MCF 10A (cell line): ENCODE measurements at regions of chr15 and their contacts with region 1.

Region 1: DNA sequence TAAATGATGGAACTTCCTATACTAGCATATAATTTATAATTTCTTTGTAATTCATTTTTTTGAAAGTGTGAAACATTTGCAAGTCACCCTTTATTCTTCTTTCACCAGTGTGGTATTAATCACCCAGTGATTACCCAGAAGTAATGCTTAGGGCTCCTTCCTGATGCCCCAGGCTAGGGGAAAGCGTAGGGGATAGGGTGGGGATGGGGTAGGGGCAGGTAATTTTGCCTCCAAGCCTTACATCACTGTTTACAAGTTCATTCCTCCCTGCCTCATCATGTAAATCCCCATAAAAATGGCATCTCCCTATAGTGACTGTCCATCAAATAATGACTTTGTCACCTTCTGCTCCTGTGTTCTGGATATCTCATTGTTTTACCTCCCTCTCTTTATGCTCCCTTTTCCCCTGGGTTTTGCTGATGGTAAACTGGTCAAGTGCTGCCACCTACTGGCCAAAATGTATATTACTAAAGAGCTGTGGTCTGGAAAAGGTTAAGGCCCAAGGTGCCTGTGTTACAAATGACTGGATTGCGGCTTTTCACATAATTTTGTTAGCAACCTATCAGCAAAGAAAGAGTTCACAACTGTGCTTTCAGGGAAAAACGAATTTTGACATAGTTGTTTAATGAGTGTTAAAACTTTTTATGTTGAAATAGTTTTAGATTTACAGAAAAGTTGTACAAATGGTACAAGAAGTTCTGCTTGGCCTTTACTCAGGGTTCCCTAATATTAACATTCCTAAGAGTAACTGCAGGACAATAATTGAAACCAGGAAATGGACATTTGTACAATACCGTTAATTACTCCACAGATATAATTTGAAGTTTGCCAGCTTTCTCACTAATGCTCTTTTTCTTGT is 54.7 kb downstream of the ONECUT1 start:
- DNase-seq: peak; percentile 81
- H3K4me3 Mint-ChIP-seq: no peak overlapping the region
- H3K27ac Mint-ChIP-seq: no peak overlapping the region
- H3K4me1 Mint-ChIP-seq: peaks cover 1% of the 10 kb centered on the region
- H3K27me3 Mint-ChIP-seq: no peaks in the 10 kb centered on the region
- CTCF ChIP-seq: peak; percentile 81

Region 2: DNA sequence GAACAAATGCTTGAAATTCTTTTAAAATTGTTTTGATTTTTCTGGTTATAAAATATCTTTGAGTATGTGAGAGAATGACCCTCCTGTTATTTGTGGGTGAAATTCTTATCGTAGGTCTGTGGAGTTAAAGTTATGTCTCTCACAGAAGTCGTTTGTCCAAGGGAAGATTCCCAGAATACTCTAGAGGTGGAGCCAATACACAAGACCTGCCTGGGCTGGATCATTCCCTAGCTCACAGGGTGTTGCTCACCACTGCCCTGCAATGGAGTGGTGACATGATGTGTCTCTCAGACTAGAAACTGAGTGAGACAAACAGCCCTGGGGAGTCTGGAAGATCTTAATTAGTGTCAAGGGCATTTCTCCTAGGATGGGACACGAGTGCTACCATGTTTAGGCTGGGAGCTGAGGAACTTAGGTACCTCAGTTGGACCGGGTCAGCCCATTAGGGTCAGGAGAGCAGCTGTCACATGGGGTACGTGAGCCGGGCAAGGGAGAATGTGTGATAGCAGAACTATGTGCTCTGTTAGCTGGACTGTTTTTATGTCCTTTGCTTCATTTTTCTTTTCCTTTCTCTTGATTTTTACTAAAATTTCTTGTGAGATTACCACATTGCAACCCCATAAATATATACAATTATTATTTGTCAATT is 386.3 kb before region 1 on chr15:
- CTCF ChIA-PET with region 1: no interaction called
- POLR2A ChIA-PET with region 1: no interaction called
- intact Hi-C with region 1: no loop called
- DNase-seq: no peak
- H3K4me3 Mint-ChIP-seq: no peak overlapping the region
- H3K27ac Mint-ChIP-seq: no peak overlapping the region
- H3K4me1 Mint-ChIP-seq: no peaks in the 10 kb centered on the region
- H3K27me3 Mint-ChIP-seq: no peaks in the 10 kb centered on the region
- CTCF ChIP-seq: no peak

Region 3: DNA sequence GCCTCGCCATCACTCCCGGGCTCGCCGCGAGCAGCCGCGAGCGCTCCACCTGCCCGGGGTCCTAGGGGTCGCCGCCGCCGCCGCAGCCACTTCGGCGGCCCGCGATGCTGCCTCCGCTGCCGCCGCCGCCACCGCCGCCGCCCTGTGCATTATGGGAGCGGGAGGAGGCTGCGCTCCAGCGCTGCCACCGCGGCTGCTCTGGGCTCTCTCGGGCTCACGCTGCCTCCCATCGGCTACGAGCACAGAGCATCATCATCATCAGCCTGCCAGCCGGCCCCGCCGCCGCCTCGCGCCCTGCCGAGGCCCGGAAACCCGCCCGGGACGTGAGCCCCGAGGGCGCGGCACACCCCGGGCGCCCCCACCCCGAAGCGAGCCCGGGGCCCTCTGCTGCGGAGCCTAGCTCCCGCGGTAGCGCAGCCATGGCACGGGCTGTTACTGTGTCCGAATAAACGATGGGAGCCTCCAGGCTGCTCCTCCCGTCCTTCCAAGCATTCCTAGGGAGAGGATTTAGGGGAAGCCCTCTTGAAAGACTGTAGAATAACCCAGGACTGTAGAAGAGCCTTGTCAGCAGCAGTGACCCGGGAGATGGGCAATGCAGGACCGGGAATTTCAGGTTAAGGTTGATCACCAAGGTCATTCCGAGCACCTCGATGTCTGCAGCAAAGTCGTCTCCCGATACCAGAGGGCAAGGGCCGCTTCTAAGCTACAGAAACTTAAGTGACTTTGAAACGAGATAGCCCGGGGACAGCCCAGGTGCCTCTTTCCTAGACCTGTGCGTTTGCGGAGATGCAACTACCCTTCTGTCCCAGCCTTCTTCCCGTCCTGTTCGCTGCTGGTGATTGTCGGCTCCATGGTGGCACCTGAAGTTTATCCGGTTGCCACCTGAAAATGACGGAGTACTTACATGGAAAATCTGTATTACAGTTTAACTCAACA is 206.2 kb before region 1 on chr15:
- CTCF ChIA-PET with region 1: interaction called, 6 read pairs
- POLR2A ChIA-PET with region 1: no interaction called
- intact Hi-C with region 1: loop called (anchors 2 kb)
- DNase-seq: peak; percentile 65
- H3K4me3 Mint-ChIP-seq: peak overlapping the region; percentile 78
- H3K27ac Mint-ChIP-seq: no peak overlapping the region
- H3K4me1 Mint-ChIP-seq: no peaks in the 10 kb centered on the region
- H3K27me3 Mint-ChIP-seq: no peaks in the 10 kb centered on the region
- CTCF ChIP-seq: no peak

Region 4: GRCh38 chr15:52651868-52652267 is 83.6 kb before region 1 on chr15:
- CTCF ChIA-PET with region 1: interaction called, 14 read pairs
- POLR2A ChIA-PET with region 1: interaction called, 21 read pairs
- intact Hi-C with region 1: no loop called
- DNase-seq: peak; percentile 90
- H3K4me3 Mint-ChIP-seq: peak overlapping the region; percentile 61
- H3K27ac Mint-ChIP-seq: peak overlapping the region; percentile 94
- H3K4me1 Mint-ChIP-seq: peaks cover 38% of the 10 kb centered on the region
- H3K27me3 Mint-ChIP-seq: no peaks in the 10 kb centered on the region
- CTCF ChIP-seq: no peak